Heart left ventricle (tissue), 16 donors: ENCODE measurements at regions of chr20 and their contacts with region 1.

Region 1: GRCh38 chr20:15155848-15156401 is 818.5 kb upstream of the FLRT3 start:
- DNase-seq: no peak
- ATAC-seq: no peak
- H3K4me3 ChIP-seq: no peak overlapping the region
- H3K27ac ChIP-seq: no peak overlapping the region
- H3K4me1 ChIP-seq: no peaks in the 10 kb centered on the region
- H3K27me3 ChIP-seq: no peaks in the 10 kb centered on the region
- CTCF ChIP-seq: no peak
- POLR2A ChIP-seq: no peak

Region 2: DNA sequence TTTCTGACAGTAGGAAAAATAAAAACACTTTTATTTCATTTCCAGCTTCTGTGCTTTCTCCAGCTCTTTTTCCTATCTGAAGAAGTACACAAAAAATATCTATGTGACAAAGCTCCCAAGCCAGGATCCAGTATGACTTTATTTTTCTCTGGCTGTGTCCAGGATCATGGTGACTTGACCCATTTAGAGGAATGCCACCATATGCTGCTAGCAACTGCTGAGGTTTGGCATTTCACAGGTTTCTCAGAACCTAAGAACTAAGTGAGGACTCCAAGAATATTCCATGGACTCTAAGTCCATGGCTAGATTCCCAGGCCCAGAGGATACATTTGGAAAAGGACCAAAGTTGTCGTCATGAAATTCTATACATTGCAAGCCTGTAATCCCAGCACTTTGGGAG is 58.1 kb after region 1 on chr20:
- intact Hi-C with region 1: loop called in 1 of 10 experiments (anchors 10 kb)
- DNase-seq: no peak
- ATAC-seq: no peak
- H3K4me3 ChIP-seq: no peak overlapping the region
- H3K27ac ChIP-seq: no peak overlapping the region
- H3K4me1 ChIP-seq: no peaks in the 10 kb centered on the region
- H3K27me3 ChIP-seq: no peaks in the 10 kb centered on the region
- CTCF ChIP-seq: no peak
- POLR2A ChIP-seq: no peak